ENCODE measurements at regions of chr11 and their contacts with region 1.

Region 1: DNA sequence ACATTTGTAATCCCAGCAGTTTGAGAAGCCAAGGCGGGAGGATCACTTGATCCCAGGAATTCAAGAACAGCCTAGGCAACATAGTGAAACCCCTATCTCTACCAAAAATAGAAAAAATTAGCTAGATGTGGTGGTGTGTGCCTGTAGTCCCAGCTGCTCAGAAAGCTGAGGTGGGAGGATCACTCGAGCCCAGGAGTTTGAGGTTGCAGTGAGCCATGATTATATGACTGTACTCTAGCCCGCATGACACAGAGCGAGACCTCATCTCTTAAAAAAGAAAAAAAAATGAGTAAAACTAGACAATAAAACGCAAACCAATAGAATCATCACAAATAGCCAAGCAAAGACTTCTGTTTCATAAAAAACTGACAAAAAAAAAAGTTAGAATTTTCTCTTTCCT is 21.8 kb downstream of the NUCB2 start:
- DNase-seq: peak; percentile 41
- H3K4me3 Mint-ChIP-seq: no peak overlapping the region
- H3K27ac Mint-ChIP-seq: peak overlapping the region; percentile 9
- H3K4me1 Mint-ChIP-seq: peaks cover 40% of the 10 kb centered on the region
- H3K27me3 Mint-ChIP-seq: no peaks in the 10 kb centered on the region

Region 2: DNA sequence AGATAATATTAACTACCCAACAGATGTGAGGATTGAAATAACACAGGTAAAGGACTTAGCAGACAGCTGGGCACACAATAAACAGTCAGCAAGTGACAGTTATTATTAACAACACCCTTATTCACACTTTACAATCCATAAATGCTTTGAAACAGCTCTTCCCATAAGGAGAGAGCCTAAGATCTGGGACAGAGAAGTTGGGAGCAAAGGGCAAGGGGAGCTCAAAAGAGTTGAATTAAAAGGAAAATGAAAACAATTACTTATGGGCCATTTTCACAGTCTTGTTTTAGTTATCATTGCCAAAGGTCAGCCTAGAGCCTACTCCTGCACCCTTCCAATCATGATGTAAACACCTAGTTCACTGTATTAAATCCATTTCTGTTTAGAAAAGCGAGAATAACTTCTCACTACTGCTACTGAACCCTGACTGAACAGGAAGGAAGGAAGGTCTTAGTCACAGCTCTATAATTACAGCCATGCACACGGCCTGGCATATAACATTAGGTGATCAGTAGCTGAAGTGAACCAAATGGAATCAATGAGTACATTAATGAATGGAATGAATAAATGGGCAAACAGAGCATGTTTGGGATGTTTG is 395.4 kb before region 1 on chr11:
- intact Hi-C with region 1: loop called (anchors 5 kb)
- DNase-seq: no peak
- H3K4me3 Mint-ChIP-seq: peak overlapping the region; percentile 31
- H3K27ac Mint-ChIP-seq: peak overlapping the region; percentile 99
- H3K4me1 Mint-ChIP-seq: peaks cover 50% of the 10 kb centered on the region
- H3K27me3 Mint-ChIP-seq: no peaks in the 10 kb centered on the region

Region 3: DNA sequence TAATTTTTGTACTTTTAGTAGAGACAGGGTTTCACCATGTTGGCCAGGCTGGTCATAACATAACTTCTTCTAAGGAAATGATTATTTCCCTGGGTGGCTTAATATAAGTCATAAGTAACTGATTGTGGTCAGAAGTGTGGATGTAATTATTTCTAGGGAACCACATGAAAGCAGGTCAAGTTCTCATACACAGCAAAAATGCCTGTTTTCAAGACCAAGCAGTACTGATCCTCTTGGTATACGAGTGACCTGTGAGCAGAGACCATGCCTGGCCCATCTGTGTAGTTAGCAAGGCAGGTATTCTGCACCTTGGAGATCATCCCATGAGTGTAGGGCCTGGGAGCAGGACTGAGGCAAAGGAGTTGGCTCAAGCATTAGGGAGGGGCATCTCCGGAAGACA is 54.3 kb before region 1 on chr11:
- intact Hi-C with region 1: loop called (anchors 1 kb)
- DNase-seq: no peak
- H3K4me3 Mint-ChIP-seq: no peak overlapping the region
- H3K27ac Mint-ChIP-seq: no peak overlapping the region
- H3K4me1 Mint-ChIP-seq: peaks cover 5% of the 10 kb centered on the region
- H3K27me3 Mint-ChIP-seq: peaks cover 48% of the 10 kb centered on the region

Region 4: GRCh38 chr11:17286332-17286731 is 12.0 kb before region 1 on chr11:
- intact Hi-C with region 1: loop called (anchors 1 kb)
- DNase-seq: no peak
- H3K4me3 Mint-ChIP-seq: no peak overlapping the region
- H3K27ac Mint-ChIP-seq: no peak overlapping the region
- H3K4me1 Mint-ChIP-seq: peaks cover 38% of the 10 kb centered on the region
- H3K27me3 Mint-ChIP-seq: no peaks in the 10 kb centered on the region

Region 5: DNA sequence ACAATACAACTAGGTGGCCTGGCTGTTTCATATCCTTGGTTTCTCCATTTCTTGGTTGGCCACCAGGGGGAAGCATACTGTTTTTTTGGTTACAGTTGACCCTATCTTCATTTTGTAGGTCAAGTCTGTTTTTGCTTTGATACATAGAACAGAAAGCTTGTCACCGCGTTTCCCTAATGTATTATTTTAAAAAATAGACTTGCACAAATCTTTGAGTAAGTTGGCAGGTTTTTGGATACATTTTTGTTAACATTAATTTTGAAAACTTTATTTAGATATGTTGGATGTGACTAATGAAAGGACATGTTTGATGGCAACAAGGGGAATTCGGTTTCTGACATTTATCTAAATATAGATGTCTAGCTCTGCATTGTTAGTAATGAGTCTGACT is 56.3 kb after region 1 on chr11:
- intact Hi-C with region 1: loop called (anchors 1 kb)
- DNase-seq: peak; percentile 52
- H3K4me3 Mint-ChIP-seq: peak overlapping the region; percentile 82
- H3K27ac Mint-ChIP-seq: peak overlapping the region; percentile 51
- H3K4me1 Mint-ChIP-seq: peaks cover 31% of the 10 kb centered on the region
- H3K27me3 Mint-ChIP-seq: peaks cover 4% of the 10 kb centered on the region

Region 6: DNA sequence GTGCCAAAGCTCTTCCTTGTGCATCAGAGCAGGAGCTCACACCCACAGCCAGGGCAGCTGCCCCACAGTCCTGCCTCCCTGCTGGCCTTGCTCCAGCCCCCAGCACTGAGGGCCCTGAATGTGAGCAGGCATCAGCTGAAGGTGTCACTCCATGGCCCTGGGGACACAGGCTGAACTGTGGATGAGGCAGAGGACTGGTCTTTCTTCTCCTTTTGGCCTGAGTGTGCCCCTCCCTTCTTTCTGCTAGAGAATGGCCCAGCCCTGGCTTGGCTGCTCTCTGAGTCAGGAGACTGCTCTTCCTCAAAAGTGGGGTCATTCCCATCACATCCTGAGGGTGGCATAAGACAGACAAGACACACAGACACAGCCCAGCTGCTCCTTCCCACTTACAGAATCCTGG is 264.9 kb after region 1 on chr11:
- intact Hi-C with region 1: no loop called
- DNase-seq: no peak
- H3K4me3 Mint-ChIP-seq: no peak overlapping the region
- H3K27ac Mint-ChIP-seq: no peak overlapping the region
- H3K4me1 Mint-ChIP-seq: peaks cover 3% of the 10 kb centered on the region
- H3K27me3 Mint-ChIP-seq: peaks cover 11% of the 10 kb centered on the region

Measured in activated T-helper 2 cell treated with anti-CD3 and anti-CD28 coated beads, Interferon-gamma antibody, Interleukin-2, Interleukin-4, amounts not matched to agents 10 μg/mL and 5 μg/mL and 100 μg/mL, durations not matched to agents 14 hours and 24 hours and 36 hours (primary cell).